ENCODE measurements at regions of chr16 and their contacts with region 1.

Region 1: GRCh38 chr16:81261049-81261648 is 22.7 kb downstream of the BCO1 start:
- DNase-seq: peak in 3 of 5 donors; percentile 3 to 24 (median 9)
- H3K4me3 ChIP-seq: no peak overlapping the region
- H3K4me3 Mint-ChIP-seq: no peak overlapping the region
- H3K27ac ChIP-seq: no peak overlapping the region
- H3K27ac Mint-ChIP-seq: no peak overlapping the region
- H3K4me1 ChIP-seq: no peaks in the 10 kb centered on the region
- H3K4me1 Mint-ChIP-seq: peaks cover 0 to 3% (median under 1%) of the 10 kb centered on the region in 4 donors
- H3K27me3 ChIP-seq: no peaks in the 10 kb centered on the region
- H3K27me3 Mint-ChIP-seq: peaks cover 1 to 2% of the 10 kb centered on the region in 2 donors

Region 2: DNA sequence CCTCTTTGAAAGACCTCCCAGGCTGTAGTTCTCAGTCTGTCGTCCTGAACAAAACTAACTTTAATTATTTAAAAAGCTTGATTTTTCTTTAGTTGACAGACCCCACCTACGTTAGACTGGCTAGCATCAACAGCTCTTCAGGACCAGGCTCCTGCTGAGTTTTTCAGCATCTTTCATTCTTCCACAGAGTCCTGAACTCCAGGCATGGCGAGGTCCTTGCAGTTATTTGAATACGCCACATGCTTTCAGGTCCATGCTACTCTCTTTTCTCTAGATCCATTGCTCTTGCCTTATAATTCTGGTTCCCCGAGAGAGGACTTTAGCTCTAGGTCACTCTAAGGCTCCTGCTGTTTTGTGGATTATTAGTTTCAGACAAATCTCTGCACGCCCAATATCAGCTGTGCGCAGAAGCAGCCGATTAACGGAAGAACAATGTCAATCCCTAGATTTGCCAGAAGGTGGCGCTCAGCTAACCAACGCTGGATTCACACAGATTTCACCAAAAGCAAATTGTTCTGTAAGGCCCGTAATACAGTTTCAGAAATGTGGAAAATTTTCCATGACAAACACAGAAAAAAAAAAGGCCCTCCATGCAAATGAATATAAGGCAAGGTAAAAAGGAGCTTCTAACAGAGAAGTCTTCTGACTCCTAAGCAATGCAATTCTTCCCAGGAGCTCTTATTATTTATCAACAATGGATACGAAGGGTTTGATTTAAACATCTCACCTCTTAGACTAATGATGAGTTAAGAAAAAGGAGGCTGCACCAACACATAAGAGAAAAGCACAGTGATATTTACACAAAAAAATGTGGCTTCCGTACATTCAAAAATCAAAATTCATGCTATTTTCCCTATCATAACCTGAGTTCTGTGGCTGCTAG is 56.1 kb before region 1 on chr16:
- CTCF ChIA-PET with region 1: no interaction called
- POLR2A ChIA-PET with region 1: no interaction called
- intact Hi-C with region 1: no loop called
- DNase-seq: peak in 4 of 5 donors; percentile 10 to 35 (median 28)
- H3K4me3 ChIP-seq: no peak overlapping the region
- H3K4me3 Mint-ChIP-seq: no peak overlapping the region
- H3K27ac ChIP-seq: no peak overlapping the region
- H3K27ac Mint-ChIP-seq: no peak overlapping the region
- H3K4me1 ChIP-seq: no peaks in the 10 kb centered on the region
- H3K4me1 Mint-ChIP-seq: peaks cover 0 to 3% (median under 1%) of the 10 kb centered on the region in 4 donors
- H3K27me3 ChIP-seq: no peaks in the 10 kb centered on the region
- H3K27me3 Mint-ChIP-seq: peaks cover 6 to 18% of the 10 kb centered on the region in 2 donors

Region 3: DNA sequence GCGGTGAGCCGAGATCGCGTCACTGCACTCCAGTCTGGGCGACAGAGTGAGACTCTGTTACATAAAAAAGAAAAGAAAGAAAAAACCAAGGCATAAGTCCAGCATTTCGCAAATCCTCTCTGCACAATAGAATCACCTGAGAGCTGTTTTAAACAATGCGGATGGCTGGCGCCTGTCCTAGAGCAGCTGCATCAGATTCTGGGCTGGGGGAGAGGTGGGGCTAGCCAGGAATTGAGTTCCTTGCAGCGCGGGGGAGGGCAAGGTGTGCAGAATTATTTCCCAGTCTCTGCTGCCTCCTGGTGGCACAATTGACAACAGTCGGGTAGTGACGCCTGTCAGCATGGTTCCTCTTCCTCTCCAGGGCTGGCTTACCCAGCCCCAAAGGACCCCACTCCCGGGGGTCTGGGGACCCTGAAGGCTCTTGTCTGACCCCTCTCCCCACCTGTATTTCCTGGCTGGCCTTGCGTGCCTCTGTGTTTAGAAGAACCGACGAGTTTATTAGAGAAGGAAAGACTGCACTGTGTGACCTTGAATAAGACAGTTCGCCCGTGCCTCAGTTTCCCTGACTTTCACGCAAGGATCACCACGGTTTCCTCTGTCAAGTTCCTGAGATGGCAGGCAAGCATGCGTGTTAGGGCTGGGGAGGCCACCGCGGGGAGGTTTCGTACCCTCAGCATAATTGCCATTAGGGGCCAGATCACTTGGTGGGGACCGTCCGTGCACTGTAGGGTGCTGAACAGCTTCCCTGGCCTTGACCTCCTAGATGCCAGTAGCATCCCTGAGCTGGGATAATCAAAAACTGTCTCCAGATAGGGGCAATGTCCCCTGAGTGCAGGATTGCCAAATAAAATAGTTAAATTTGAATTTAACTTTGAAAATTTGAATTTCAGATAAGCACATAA is 477.0 kb after region 1 on chr16:
- CTCF ChIA-PET with region 1: interaction called, 16 read pairs
- POLR2A ChIA-PET with region 1: no interaction called
- intact Hi-C with region 1: no loop called
- DNase-seq: peak; percentile 80 to 84 (median 81)
- H3K4me3 ChIP-seq: peak overlapping the region in 1 of 2 donors; percentile 3
- H3K4me3 Mint-ChIP-seq: peak overlapping the region; percentile 67 to 82 (median 75)
- H3K27ac ChIP-seq: no peak overlapping the region
- H3K27ac Mint-ChIP-seq: peak overlapping the region in 5 of 7 donors; percentile 22 to 78 (median 30)
- H3K4me1 ChIP-seq: peaks cover 4% of the 10 kb centered on the region
- H3K4me1 Mint-ChIP-seq: peaks cover 0 to 12% (median 7%) of the 10 kb centered on the region in 4 donors
- H3K27me3 ChIP-seq: no peaks in the 10 kb centered on the region
- H3K27me3 Mint-ChIP-seq: no peaks in the 10 kb centered on the region

Measured in CD4-positive, alpha-beta memory T cell (primary cell).